Ovary (tissue), 10 donors: ENCODE measurements at regions of chr5 and their contacts with region 1.

Region 1: DNA sequence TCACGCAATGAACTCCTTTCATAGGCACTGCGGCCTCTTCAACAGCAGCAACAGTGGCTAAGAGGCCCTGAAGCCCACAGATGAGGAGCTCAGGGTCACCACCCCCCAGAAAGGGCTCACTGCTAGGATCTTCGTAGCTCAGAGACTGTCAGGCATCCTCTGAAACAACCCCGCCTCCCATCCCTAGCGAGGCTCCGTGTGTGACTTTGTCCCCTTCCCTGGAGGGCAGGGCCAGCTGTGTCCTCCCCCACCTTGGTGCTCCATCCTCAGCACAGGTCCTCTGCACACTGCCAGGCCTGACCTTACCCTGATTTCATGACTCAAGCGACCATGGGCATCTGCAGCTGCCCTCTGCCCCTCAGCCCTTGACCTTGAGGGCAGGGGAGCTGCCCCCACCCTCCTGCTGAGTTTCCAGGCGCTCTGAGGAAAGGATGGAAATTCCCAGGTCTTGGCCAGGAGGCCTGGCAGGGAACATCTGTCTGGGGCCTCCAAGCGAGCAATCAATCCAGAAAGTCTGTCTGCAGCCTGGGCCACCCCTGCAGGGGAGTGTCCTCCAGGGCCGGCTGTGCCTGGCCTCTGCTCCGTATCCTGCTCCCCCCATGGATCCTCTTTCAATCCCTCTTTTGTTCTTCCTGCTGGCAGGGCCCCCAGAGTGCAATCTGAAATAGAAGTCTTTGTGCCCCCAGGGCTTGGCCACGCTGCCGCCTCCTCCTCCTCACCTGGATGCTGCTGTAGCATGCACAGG is 6.8 kb upstream of the IRX4 start:
- DNase-seq: no peak
- H3K4me3 ChIP-seq: no peak overlapping the region
- H3K27ac ChIP-seq: no peak overlapping the region
- H3K4me1 ChIP-seq: no peaks in the 10 kb centered on the region
- H3K27me3 ChIP-seq: no peaks in the 10 kb centered on the region
- CTCF ChIP-seq: no peak
- EP300 ChIP-seq: no peak
- POLR2A ChIP-seq: no peak

Region 2: GRCh38 chr5:2299388-2300220 is 410.1 kb after region 1 on chr5:
- intact Hi-C with region 1: loop called in 1 of 4 experiments (anchors 5 kb)
- DNase-seq: no peak
- H3K4me3 ChIP-seq: no peak overlapping the region
- H3K27ac ChIP-seq: no peak overlapping the region
- H3K4me1 ChIP-seq: no peaks in the 10 kb centered on the region
- H3K27me3 ChIP-seq: no peaks in the 10 kb centered on the region
- CTCF ChIP-seq: no peak
- EP300 ChIP-seq: no peak
- POLR2A ChIP-seq: no peak